A549 (cell line): ENCODE measurements at regions of chr1 and their contacts with region 1.

Region 1: GRCh38 chr1:19010995-19011844 is 54.7 kb upstream of the IFFO2 start:
- DNase-seq: peak; percentile 69 to 96
- ATAC-seq: peak; percentile 69 to 82
- H3K4me3 ChIP-seq: 0 out of 3 replicates have a peak overlapping the region, but pooled peaks have one; percentile 11
- H3K27ac ChIP-seq: peak overlapping the region; percentile 97 to 100
- H3K4me1 ChIP-seq: peaks cover 80% of the 10 kb centered on the region
- CTCF ChIP-seq: no peak
- EP300 ChIP-seq: peak; percentile 77 to 87; a peak in 4 of 5 replicates
- POLR2A ChIP-seq: peak; percentile 33; the same call in 1 of the 2 replicates
- RAD21 ChIP-seq: peak; percentile 2 to 55; a peak in 4 of 5 replicates

Region 2: DNA sequence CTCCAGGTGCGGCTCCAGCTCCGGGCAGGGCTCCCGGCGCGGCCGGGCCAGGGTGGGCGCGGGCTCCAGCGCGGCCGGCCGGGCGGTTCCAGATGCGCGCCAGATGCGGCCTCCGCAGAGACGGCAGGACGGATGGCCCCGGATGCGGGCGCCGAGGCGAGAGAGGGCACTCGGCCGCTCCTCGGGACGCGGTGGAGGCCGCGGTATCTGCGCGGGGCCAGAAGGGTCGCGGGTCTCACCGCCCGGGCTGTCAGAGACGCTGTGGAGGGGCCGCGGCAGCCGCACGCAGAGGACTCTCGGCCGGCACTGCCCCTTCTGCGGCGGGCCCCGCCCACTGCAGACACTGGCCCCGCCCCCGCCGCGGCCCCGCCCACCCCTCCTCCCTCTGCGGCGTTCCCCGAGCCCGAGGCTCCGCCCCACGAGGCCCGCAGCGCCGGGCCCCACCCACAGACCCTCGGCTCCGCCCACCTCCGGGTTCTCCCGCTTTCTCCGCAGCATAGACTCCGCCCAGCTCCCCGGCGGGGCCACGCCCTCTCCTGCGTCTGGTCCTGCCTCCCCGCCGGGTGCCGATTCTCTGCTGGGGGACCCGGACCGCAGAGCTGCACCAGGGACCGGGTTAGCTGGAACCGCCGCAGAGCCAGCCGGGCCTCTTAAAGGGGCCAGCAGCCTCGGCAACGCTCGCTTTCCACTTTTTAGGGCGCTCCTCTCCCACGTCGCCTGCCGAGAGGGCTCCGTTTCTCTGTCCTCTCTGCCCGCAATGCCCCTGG is 54.7 kb before region 1 on chr1 and contains the start of gene IFFO2:
- CTCF ChIA-PET with region 1: interaction called, 10 read pairs
- POLR2A ChIA-PET with region 1: interaction called, 4 read pairs
- DNase-seq: peak; percentile 87 to 92
- ATAC-seq: peak; percentile 74 to 88
- H3K4me3 ChIP-seq: peak within 1 kb of the TSS; percentile 91
- H3K27ac ChIP-seq: peak within 1 kb of the TSS; percentile 85 to 96
- H3K4me1 ChIP-seq: peaks cover 37% of the 10 kb centered on the region
- CTCF ChIP-seq: no peak
- EP300 ChIP-seq: no peak
- POLR2A ChIP-seq: peak; percentile 92
- RAD21 ChIP-seq: no peak
- polyA plus RNA-seq, gene IFFO2: 23.0 and 24.3 TPM in 2 replicates

Region 3: GRCh38 chr1:19067182-19067911 is 56.1 kb after region 1 on chr1:
- CTCF ChIA-PET with region 1: interaction called, 14 read pairs
- POLR2A ChIA-PET with region 1: interaction called, 3 read pairs
- DNase-seq: peak in 1 of 2 experiments; percentile 37
- ATAC-seq: peak in 1 of 2 experiments; percentile 28; a peak in 3 of 6 replicates
- H3K4me3 ChIP-seq: no peak overlapping the region
- H3K27ac ChIP-seq: peak overlapping the region; percentile 80 to 89
- H3K4me1 ChIP-seq: peaks cover 34% of the 10 kb centered on the region
- CTCF ChIP-seq: no peak
- EP300 ChIP-seq: no peak
- POLR2A ChIP-seq: no peak
- RAD21 ChIP-seq: no peak

Region 4: GRCh38 chr1:19081218-19081893 is 70.1 kb after region 1 on chr1:
- CTCF ChIA-PET with region 1: interaction called, 12 read pairs
- POLR2A ChIA-PET with region 1: no interaction called
- DNase-seq: peak; percentile 25 to 69
- ATAC-seq: peak; percentile 54 to 68; a peak in 4 of 6 replicates
- H3K4me3 ChIP-seq: peak overlapping the region; percentile 38
- H3K27ac ChIP-seq: peak overlapping the region; percentile 88 to 95
- H3K4me1 ChIP-seq: peaks cover 46% of the 10 kb centered on the region
- CTCF ChIP-seq: no peak
- EP300 ChIP-seq: no peak
- POLR2A ChIP-seq: no peak
- RAD21 ChIP-seq: no peak